Endothelial cell of umbilical vein (primary cell): ENCODE measurements at regions of chr7 and their contacts with region 1.

Region 1: GRCh38 chr7:156640257-156640948 is at the start of gene RNF32:
- DNase-seq: peak; percentile 90
- H3K4me3 ChIP-seq: peak within 1 kb of the TSS; percentile 57 to 82 (median 77)
- H3K27ac ChIP-seq: peak within 1 kb of the TSS; percentile 71
- H3K4me1 ChIP-seq: peaks cover 4% of the 10 kb centered on the region
- H3K27me3 ChIP-seq: peaks cover 2 to 6% of the 10 kb centered on the region in 2 experiments
- CTCF ChIP-seq: no peak
- POLR2A ChIP-seq: peak; percentile 60
- total RNA-seq, gene RNF32: not detected in 2 replicates

Region 2: GRCh38 chr7:155804897-155805825 is 835.2 kb before region 1 on chr7:
- CTCF ChIA-PET with region 1: interaction called, 3 read pairs
- POLR2A ChIA-PET with region 1: no interaction called
- dilution Hi-C with region 1: no loop called
- intact Hi-C with region 1: loop called (anchors 2 kb)
- DNase-seq: peak; percentile 69
- H3K4me3 ChIP-seq: peak overlapping the region; percentile 12 to 56 (median 31)
- H3K27ac ChIP-seq: no peak overlapping the region
- H3K4me1 ChIP-seq: peaks cover 29% of the 10 kb centered on the region
- H3K27me3 ChIP-seq: peaks cover 14 to 58% of the 10 kb centered on the region in 2 experiments
- CTCF ChIP-seq: peak; percentile 50 to 80
- POLR2A ChIP-seq: no peak

Region 3: GRCh38 chr7:155885167-155886155 is 754.9 kb before region 1 on chr7:
- CTCF ChIA-PET with region 1: no interaction called
- POLR2A ChIA-PET with region 1: no interaction called
- dilution Hi-C with region 1: no loop called
- intact Hi-C with region 1: loop called (anchors 10 kb)
- DNase-seq: peak; percentile 81
- H3K4me3 ChIP-seq: no peak overlapping the region
- H3K27ac ChIP-seq: peak overlapping the region; percentile 66
- H3K4me1 ChIP-seq: peaks cover 5% of the 10 kb centered on the region
- H3K27me3 ChIP-seq: no peaks in the 10 kb centered on the region
- CTCF ChIP-seq: no peak
- POLR2A ChIP-seq: no peak

Region 4: GRCh38 chr7:156607332-156608172 is 32.9 kb before region 1 on chr7:
- CTCF ChIA-PET with region 1: no interaction called
- POLR2A ChIA-PET with region 1: no interaction called
- dilution Hi-C with region 1: no loop called
- intact Hi-C with region 1: loop called (anchors 2 kb)
- DNase-seq: no peak
- H3K4me3 ChIP-seq: peak overlapping the region; percentile 42 to 57 (median 44)
- H3K27ac ChIP-seq: no peak overlapping the region
- H3K4me1 ChIP-seq: peaks cover 14% of the 10 kb centered on the region
- H3K27me3 ChIP-seq: no peaks in the 10 kb centered on the region
- CTCF ChIP-seq: no peak
- POLR2A ChIP-seq: no peak

Region 5: DNA sequence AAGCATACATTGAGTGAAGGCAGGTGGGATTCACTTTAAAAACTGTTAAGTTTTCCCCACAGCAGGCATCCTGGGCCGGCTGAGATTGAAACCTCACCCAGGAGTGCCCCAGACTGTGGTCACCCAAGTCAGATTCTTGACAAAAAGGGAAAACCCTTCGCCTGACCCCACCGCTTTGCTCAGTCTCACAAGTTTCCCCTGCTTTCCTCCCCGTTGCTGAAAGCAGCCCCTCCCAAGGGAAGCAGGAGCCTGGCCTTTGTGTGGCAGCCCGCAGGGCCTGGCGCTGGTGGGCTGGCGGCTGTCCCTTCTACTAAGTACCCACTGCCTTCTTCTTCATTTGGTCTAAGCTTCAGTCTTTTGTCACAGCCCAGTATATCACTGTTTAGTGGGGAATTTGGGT is 16.2 kb after region 1 on chr7:
- CTCF ChIA-PET with region 1: no interaction called
- POLR2A ChIA-PET with region 1: no interaction called
- dilution Hi-C with region 1: no loop called
- intact Hi-C with region 1: no loop called
- DNase-seq: no peak
- H3K4me3 ChIP-seq: no peak overlapping the region
- H3K27ac ChIP-seq: no peak overlapping the region
- H3K4me1 ChIP-seq: no peaks in the 10 kb centered on the region
- H3K27me3 ChIP-seq: no peaks in the 10 kb centered on the region
- CTCF ChIP-seq: no peak
- POLR2A ChIP-seq: no peak

Region 6: GRCh38 chr7:157372235-157373232 is 732.1 kb after region 1 on chr7:
- CTCF ChIA-PET with region 1: no interaction called
- POLR2A ChIA-PET with region 1: no interaction called
- dilution Hi-C with region 1: no loop called
- intact Hi-C with region 1: no loop called
- DNase-seq: no peak
- H3K4me3 ChIP-seq: no peak overlapping the region
- H3K27ac ChIP-seq: no peak overlapping the region
- H3K4me1 ChIP-seq: peaks cover 8% of the 10 kb centered on the region
- H3K27me3 ChIP-seq: no peaks in the 10 kb centered on the region
- CTCF ChIP-seq: no peak
- POLR2A ChIP-seq: no peak